GM12878 (cell line): ENCODE measurements at regions of chr7 and their contacts with region 1.

Region 1: DNA sequence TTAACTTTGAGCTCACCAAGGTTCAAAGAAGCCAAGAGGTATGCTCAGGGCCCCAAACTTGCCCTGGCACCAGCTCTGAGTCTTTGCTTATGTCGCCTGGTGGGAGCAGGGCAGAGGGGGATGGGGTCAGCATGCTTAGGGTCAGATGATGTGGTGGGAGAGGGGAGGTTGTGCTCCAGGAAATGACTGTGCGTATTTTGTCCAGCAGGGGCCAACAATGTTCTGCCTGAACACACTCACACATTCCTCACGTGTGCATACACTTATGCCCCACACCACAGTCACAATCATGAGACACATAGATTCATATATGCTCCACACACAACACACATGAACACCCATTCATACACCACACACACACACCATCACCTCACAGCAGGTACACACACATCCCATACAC is 4.4 kb upstream of the RAMP3 start:
- DNase-seq: no peak
- ATAC-seq: no peak
- H3K4me3 ChIP-seq: no peak overlapping the region
- H3K27ac ChIP-seq: no peak overlapping the region
- H3K4me1 ChIP-seq: no peaks in the 10 kb centered on the region
- H3K27me3 ChIP-seq: peaks cover 0 to 3% of the 10 kb centered on the region in 2 experiments; a peak in 1 of 4 replicates
- CTCF ChIP-seq: 0 out of 6 replicates have a peak, but pooled peaks of 1 of the 3 experiments have one; percentile 3
- EP300 ChIP-seq: no peak
- POLR2A ChIP-seq: no peak
- RAD21 ChIP-seq: no peak

Region 2: GRCh38 chr7:45126920-45127319 is 26.3 kb before region 1 on chr7:
- CTCF ChIA-PET with region 1: no interaction called
- POLR2A ChIA-PET with region 1: no interaction called
- RAD21 ChIA-PET with region 1: no interaction called
- SMC1A ChIA-PET with region 1: no interaction called
- in situ Hi-C with region 1: no loop called
- intact Hi-C with region 1: no loop called
- DNase-seq: no peak
- ATAC-seq: no peak
- H3K4me3 ChIP-seq: no peak overlapping the region
- H3K27ac ChIP-seq: no peak overlapping the region
- H3K4me1 ChIP-seq: peaks cover 5% of the 10 kb centered on the region
- H3K27me3 ChIP-seq: no peaks in the 10 kb centered on the region
- CTCF ChIP-seq: no peak
- EP300 ChIP-seq: no peak
- POLR2A ChIP-seq: no peak
- RAD21 ChIP-seq: no peak

Region 3: GRCh38 chr7:45252857-45253256 is 99.6 kb after region 1 on chr7:
- CTCF ChIA-PET with region 1: interaction called, 58 read pairs
- POLR2A ChIA-PET with region 1: no interaction called
- RAD21 ChIA-PET with region 1: no interaction called
- SMC1A ChIA-PET with region 1: no interaction called
- in situ Hi-C with region 1: loop called (anchors 5 kb)
- intact Hi-C with region 1: no loop called
- DNase-seq: no peak
- ATAC-seq: no peak; the same call in 2 of the 3 replicates
- H3K4me3 ChIP-seq: no peak overlapping the region
- H3K27ac ChIP-seq: no peak overlapping the region
- H3K4me1 ChIP-seq: no peaks in the 10 kb centered on the region
- H3K27me3 ChIP-seq: no peaks in the 10 kb centered on the region
- CTCF ChIP-seq: no peak
- EP300 ChIP-seq: no peak
- POLR2A ChIP-seq: no peak
- RAD21 ChIP-seq: no peak

Region 4: GRCh38 chr7:45259966-45260646 is 106.9 kb after region 1 on chr7:
- CTCF ChIA-PET with region 1: interaction called, 58 read pairs
- POLR2A ChIA-PET with region 1: no interaction called
- RAD21 ChIA-PET with region 1: interaction called, 11 read pairs
- SMC1A ChIA-PET with region 1: interaction called, 19 read pairs
- in situ Hi-C with region 1: no loop called
- intact Hi-C with region 1: loop called (anchors 1 kb)
- DNase-seq: no peak
- ATAC-seq: peak; percentile 98
- H3K4me3 ChIP-seq: no peak overlapping the region
- H3K27ac ChIP-seq: no peak overlapping the region
- H3K4me1 ChIP-seq: peaks cover 7% of the 10 kb centered on the region
- H3K27me3 ChIP-seq: no peaks in the 10 kb centered on the region; a peak in 1 of 4 replicates
- CTCF ChIP-seq: peak; percentile 94 to 99 (median 99)
- EP300 ChIP-seq: no peak
- POLR2A ChIP-seq: no peak
- RAD21 ChIP-seq: peak; percentile 90